HCT116 (cell line): ENCODE measurements at regions of chr5 and their contacts with region 1.

Region 1: DNA sequence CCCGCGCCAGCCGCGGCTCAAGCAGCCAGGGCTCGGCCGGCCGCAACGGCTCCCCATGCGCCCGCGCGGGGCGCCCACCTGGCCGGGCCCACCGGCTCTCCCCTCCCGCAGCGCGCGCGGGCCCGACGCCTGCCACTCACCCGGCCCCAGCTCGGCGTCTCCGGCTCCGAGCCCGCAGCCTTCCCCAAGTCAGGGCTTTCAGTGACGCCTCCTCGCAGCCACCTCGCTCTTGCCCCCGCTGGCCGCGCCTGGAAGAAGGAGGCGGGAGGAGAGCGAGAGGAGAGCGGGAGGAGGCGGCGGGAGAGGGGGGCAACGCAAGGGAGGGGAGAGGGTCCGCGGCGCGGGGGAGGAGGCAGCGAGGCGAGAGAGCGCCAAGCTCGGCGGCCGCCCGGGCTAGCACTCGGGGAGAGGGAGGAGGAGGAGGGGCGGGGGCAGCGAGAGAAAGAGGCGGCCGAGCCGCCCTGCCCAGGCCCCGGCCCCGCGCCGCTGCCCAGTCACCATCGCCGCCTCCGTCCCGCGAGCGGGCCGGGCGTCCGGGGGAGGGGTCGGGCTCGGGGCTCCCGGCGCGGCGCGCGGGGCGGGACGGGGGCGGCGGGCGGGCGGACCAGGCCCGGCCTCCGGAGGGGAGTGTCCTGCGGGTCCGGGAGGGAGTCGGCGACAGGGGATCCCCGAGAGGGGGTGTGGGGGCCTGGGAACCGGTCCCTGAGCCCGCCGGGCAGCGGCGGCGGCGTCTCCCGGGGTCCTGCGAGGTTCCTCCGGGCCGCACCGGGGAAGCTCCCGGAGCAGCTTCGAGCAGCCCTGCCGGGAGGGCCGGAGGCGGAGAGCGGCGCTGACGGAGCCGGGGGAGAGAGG is at the start of gene LHFPL2:
- DNase-seq: no peak
- ATAC-seq: peak; percentile 82
- H3K4me3 ChIP-seq: peak within 1 kb of the TSS; percentile 64 to 82
- H3K27ac ChIP-seq: peak within 1 kb of the TSS; percentile 73
- H3K4me1 ChIP-seq: peaks cover 10 to 20% of the 10 kb centered on the region in 2 experiments
- H3K27me3 ChIP-seq: no peaks in the 10 kb centered on the region
- CTCF ChIP-seq: no peak
- POLR2A ChIP-seq: no peak
- RAD21 ChIP-seq: no peak
- total RNA-seq, gene LHFPL2: 17.9 TPM

Region 2: GRCh38 chr5:78799266-78800017 is 150.9 kb after region 1 on chr5:
- CTCF ChIA-PET with region 1: no interaction called
- POLR2A ChIA-PET with region 1: no interaction called
- RAD21 ChIA-PET with region 1: no interaction called
- intact Hi-C with region 1: loop called (anchors 10 kb)
- DNase-seq: no peak
- ATAC-seq: no peak; the same call in 1 of the 2 replicates
- H3K4me3 ChIP-seq: no peak overlapping the region
- H3K27ac ChIP-seq: no peak overlapping the region
- H3K4me1 ChIP-seq: no peaks in the 10 kb centered on the region
- H3K27me3 ChIP-seq: no peaks in the 10 kb centered on the region
- CTCF ChIP-seq: peak in 2 of 3 experiments; percentile 12 to 27; a peak in 3 of 6 replicates
- POLR2A ChIP-seq: no peak
- RAD21 ChIP-seq: peak; percentile 44; the same call in 1 of the 2 replicates

Region 3: GRCh38 chr5:78838753-78839152 is 190.2 kb after region 1 on chr5:
- CTCF ChIA-PET with region 1: no interaction called
- POLR2A ChIA-PET with region 1: no interaction called
- RAD21 ChIA-PET with region 1: interaction called in 1 of 2 experiments, 10 read pairs
- intact Hi-C with region 1: no loop called
- DNase-seq: no peak
- ATAC-seq: no peak
- H3K4me3 ChIP-seq: no peak overlapping the region
- H3K27ac ChIP-seq: no peak overlapping the region
- H3K4me1 ChIP-seq: no peaks in the 10 kb centered on the region
- H3K27me3 ChIP-seq: no peaks in the 10 kb centered on the region
- CTCF ChIP-seq: no peak
- POLR2A ChIP-seq: no peak
- RAD21 ChIP-seq: no peak

Region 4: GRCh38 chr5:78886341-78887230 is 238.0 kb after region 1 on chr5:
- CTCF ChIA-PET with region 1: no interaction called
- POLR2A ChIA-PET with region 1: no interaction called
- RAD21 ChIA-PET with region 1: no interaction called
- intact Hi-C with region 1: loop called (anchors 5 kb)
- DNase-seq: no peak
- ATAC-seq: peak; percentile 36; the same call in 1 of the 2 replicates
- H3K4me3 ChIP-seq: no peak overlapping the region
- H3K27ac ChIP-seq: no peak overlapping the region
- H3K4me1 ChIP-seq: peaks cover 0 to 5% of the 10 kb centered on the region in 2 experiments; a peak in 2 of 4 replicates
- H3K27me3 ChIP-seq: no peaks in the 10 kb centered on the region
- CTCF ChIP-seq: peak; percentile 30 to 77 (median 56); a peak in 5 of 6 replicates
- POLR2A ChIP-seq: no peak
- RAD21 ChIP-seq: peak; percentile 31; the same call in 1 of the 2 replicates